Endothelial cell of umbilical vein (primary cell): ENCODE measurements at regions of chr7 and their contacts with region 1.

Region 1: DNA sequence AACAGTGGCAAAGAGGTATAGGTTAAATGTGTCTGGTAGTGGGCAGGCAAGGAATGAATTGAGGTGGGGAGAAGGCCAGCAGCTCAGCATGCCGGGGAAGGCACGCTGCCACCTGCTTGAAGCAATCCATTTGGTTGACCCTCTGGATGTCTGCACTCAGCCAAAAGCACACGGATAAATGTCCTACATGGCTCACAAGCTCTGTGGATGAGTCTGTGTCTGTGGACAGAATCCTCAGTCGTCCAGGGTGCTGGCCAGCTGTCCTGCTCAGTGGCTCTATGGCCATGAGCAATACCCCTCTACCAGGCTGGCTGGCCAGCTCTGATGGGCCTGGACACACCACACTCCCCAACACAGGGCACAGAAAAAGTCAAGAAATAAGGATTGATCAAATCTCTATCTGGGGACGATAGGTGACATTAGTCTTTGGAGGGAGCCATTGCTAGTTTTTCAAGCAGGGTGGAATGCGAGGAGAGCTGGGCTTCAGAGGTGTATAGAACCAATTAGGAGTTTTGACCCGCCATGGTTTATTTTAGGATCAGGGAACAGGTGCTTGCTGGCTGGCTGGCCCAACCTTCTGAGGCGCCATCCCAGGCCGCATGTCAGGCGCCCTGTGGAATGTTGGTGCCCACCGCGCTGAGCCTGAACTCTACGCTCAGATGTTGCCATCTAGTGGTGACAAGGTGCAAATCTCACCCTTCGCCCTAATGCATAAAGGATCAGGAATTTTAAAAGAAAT is 493.4 kb downstream of the TNS3 start:
- DNase-seq: peak; percentile 65
- H3K4me3 ChIP-seq: no peak overlapping the region
- H3K27ac ChIP-seq: no peak overlapping the region
- H3K4me1 ChIP-seq: no peaks in the 10 kb centered on the region
- H3K27me3 ChIP-seq: no peaks in the 10 kb centered on the region
- CTCF ChIP-seq: peak; percentile 74 to 75
- POLR2A ChIP-seq: no peak

Region 2: GRCh38 chr7:46576950-46577349 is 511.5 kb before region 1 on chr7:
- CTCF ChIA-PET with region 1: no interaction called
- POLR2A ChIA-PET with region 1: no interaction called
- dilution Hi-C with region 1: no loop called
- intact Hi-C with region 1: loop called (anchors 10 kb)
- DNase-seq: peak; percentile 88
- H3K4me3 ChIP-seq: no peak overlapping the region
- H3K27ac ChIP-seq: peak overlapping the region; percentile 55
- H3K4me1 ChIP-seq: peaks cover 23% of the 10 kb centered on the region
- H3K27me3 ChIP-seq: no peaks in the 10 kb centered on the region
- CTCF ChIP-seq: no peak
- POLR2A ChIP-seq: peak; percentile 40

Region 3: GRCh38 chr7:46685051-46685450 is 403.4 kb before region 1 on chr7:
- CTCF ChIA-PET with region 1: no interaction called
- POLR2A ChIA-PET with region 1: no interaction called
- dilution Hi-C with region 1: no loop called
- intact Hi-C with region 1: loop called (anchors 1 kb)
- DNase-seq: peak; percentile 31
- H3K4me3 ChIP-seq: no peak overlapping the region
- H3K27ac ChIP-seq: no peak overlapping the region
- H3K4me1 ChIP-seq: no peaks in the 10 kb centered on the region
- H3K27me3 ChIP-seq: no peaks in the 10 kb centered on the region
- CTCF ChIP-seq: peak in 1 of 2 donors; percentile 28
- POLR2A ChIP-seq: no peak

Region 4: DNA sequence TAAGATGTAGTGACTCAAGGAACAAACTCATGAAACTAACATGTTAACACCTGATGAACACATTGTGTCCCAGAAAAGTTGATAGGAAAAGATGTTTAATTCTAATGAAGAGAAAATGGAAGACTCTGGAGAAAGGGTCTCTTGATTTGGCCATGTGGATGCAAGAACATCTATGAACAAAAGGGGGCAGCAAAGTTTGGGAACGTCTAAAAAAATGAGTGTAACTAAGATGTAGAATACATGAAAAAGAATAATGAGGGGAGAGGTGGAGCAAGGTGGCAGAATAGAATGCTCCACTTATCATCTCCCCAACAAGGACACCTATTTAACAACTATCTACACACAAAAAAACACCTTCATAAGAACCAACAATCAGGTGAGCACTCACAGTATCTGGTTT is 311.7 kb before region 1 on chr7:
- CTCF ChIA-PET with region 1: interaction called, 10 read pairs
- POLR2A ChIA-PET with region 1: no interaction called
- dilution Hi-C with region 1: no loop called
- intact Hi-C with region 1: loop called (anchors 1 kb)
- DNase-seq: peak; percentile 51
- H3K4me3 ChIP-seq: no peak overlapping the region
- H3K27ac ChIP-seq: no peak overlapping the region
- H3K4me1 ChIP-seq: no peaks in the 10 kb centered on the region
- H3K27me3 ChIP-seq: no peaks in the 10 kb centered on the region
- CTCF ChIP-seq: peak; percentile 43
- POLR2A ChIP-seq: no peak

Region 5: GRCh38 chr7:46848944-46849343 is 239.6 kb before region 1 on chr7:
- CTCF ChIA-PET with region 1: no interaction called
- POLR2A ChIA-PET with region 1: no interaction called
- dilution Hi-C with region 1: no loop called
- intact Hi-C with region 1: loop called (anchors 5 kb)
- DNase-seq: peak; percentile 13
- H3K4me3 ChIP-seq: no peak overlapping the region
- H3K27ac ChIP-seq: no peak overlapping the region
- H3K4me1 ChIP-seq: peaks cover 4% of the 10 kb centered on the region
- H3K27me3 ChIP-seq: no peaks in the 10 kb centered on the region
- CTCF ChIP-seq: no peak
- POLR2A ChIP-seq: no peak

Region 6: DNA sequence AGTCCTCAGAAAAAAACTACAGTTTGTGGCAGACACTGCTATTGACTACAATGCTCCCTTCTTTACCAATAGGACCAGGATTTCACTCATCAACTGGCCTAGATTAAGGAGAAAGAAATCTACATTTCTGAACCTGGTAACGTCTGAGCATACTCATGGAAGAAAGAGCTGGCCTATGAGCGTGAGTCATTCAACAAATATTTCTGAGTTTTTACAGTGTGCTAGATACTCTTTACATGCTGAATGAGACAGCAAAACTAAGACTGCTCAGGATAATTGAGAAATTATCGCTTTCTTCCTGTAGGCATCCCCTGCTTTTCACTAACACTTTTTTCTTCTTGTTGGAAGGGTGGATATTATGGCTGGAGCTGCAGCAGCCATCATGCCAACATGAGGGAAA is 116.3 kb before region 1 on chr7:
- CTCF ChIA-PET with region 1: no interaction called
- POLR2A ChIA-PET with region 1: no interaction called
- dilution Hi-C with region 1: no loop called
- intact Hi-C with region 1: loop called (anchors 5 kb)
- DNase-seq: peak; percentile 12
- H3K4me3 ChIP-seq: no peak overlapping the region
- H3K27ac ChIP-seq: no peak overlapping the region
- H3K4me1 ChIP-seq: peaks cover 4% of the 10 kb centered on the region
- H3K27me3 ChIP-seq: no peaks in the 10 kb centered on the region
- CTCF ChIP-seq: no peak
- POLR2A ChIP-seq: no peak

Region 7: GRCh38 chr7:47254081-47255006 is 165.8 kb after region 1 on chr7:
- CTCF ChIA-PET with region 1: no interaction called
- POLR2A ChIA-PET with region 1: no interaction called
- dilution Hi-C with region 1: no loop called
- intact Hi-C with region 1: loop called (anchors 1 kb)
- DNase-seq: peak; percentile 55
- H3K4me3 ChIP-seq: peak overlapping the region; percentile 59 to 69 (median 68)
- H3K27ac ChIP-seq: peak overlapping the region; percentile 58
- H3K4me1 ChIP-seq: peaks cover 15% of the 10 kb centered on the region
- H3K27me3 ChIP-seq: peaks cover 0 to 1% of the 10 kb centered on the region in 2 experiments
- CTCF ChIP-seq: peak; percentile 64 to 90
- POLR2A ChIP-seq: no peak

Region 8: GRCh38 chr7:47291461-47292081 is 203.1 kb after region 1 on chr7:
- CTCF ChIA-PET with region 1: no interaction called
- POLR2A ChIA-PET with region 1: no interaction called
- dilution Hi-C with region 1: no loop called
- intact Hi-C with region 1: no loop called
- DNase-seq: peak; percentile 62
- H3K4me3 ChIP-seq: no peak overlapping the region
- H3K27ac ChIP-seq: peak overlapping the region; percentile 90
- H3K4me1 ChIP-seq: peaks cover 20% of the 10 kb centered on the region
- H3K27me3 ChIP-seq: no peaks in the 10 kb centered on the region
- CTCF ChIP-seq: no peak
- POLR2A ChIP-seq: no peak